Cardiac septum (tissue), 1 donor: ENCODE measurements at regions of chr3 and their contacts with region 1.

Region 1: GRCh38 chr3:155701882-155702465 is 42.9 kb downstream of the PLCH1 start:
- DNase-seq: no peak

Region 2: DNA sequence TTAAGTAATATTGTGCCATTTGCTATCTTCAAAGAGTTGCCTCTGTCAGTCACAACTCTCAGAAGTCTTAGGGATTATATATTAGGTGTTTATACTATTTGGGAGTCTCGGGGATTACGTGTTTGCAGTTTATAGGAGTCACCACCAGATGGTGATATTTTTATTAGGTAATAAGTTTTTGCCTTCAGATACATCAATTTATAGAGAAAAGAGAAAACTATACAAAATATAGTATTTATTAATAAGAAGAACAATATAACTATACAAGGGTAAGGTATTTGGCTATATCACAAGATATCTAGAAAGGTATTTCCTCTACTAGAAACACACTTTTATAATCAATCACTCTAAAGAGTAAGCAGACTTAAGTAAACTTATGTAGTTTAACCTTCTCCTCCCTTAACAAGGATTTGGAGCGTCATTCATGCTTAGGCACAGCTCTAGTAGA is 1367.0 kb before region 1 on chr3:
- intact Hi-C with region 1: loop called (anchors 10 kb)
- DNase-seq: no peak

Region 3: GRCh38 chr3:155354688-155355087 is 347.3 kb before region 1 on chr3:
- intact Hi-C with region 1: loop called (anchors 2 kb)
- DNase-seq: no peak

Region 4: DNA sequence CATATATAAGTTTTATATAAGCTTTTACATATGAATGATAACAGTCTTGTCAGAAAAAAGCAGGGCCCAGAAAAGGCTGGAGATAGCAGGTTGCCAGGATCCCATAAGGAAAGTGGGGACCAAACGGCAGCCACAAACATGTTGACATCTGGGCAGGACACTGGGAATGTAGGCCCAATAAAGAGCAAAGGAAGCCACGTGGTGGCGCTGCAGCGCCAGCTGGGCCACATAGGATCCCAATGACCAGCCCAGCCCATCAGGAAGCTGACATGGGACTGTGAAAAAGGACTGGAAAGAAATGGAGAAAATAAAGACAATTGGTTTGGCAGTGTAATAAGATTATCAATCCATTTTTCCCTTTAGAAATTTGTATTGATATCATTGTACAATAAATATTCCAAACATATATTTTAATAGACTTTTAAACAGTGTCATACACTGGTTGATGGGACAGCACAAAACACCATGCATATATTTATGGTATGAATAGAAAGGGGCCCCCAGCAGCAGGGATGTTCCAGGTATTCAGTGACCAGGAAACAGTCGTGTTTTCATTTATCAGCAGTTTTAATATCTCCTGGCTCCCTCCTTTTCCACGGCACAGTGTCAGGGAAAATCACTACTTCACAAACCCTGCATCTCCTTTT is 319.5 kb before region 1 on chr3:
- intact Hi-C with region 1: loop called (anchors 2 kb)
- DNase-seq: peak; percentile 83

Region 5: GRCh38 chr3:155766206-155766605 is 64.2 kb after region 1 on chr3:
- intact Hi-C with region 1: no loop called
- DNase-seq: no peak

Region 6: GRCh38 chr3:156098437-156099035 is 396.6 kb after region 1 on chr3:
- intact Hi-C with region 1: no loop called
- DNase-seq: no peak